ENCODE measurements at regions of chr19 and their contacts with region 1.

Region 1: GRCh38 chr19:13033819-13034611 is 38.7 kb downstream of the NFIX start:
- DNase-seq: peak; percentile 54
- H3K4me3 ChIP-seq: no peak overlapping the region
- H3K27ac ChIP-seq: no peak overlapping the region
- H3K4me1 ChIP-seq: no peaks in the 10 kb centered on the region
- CTCF ChIP-seq: peak; percentile 91

Region 2: DNA sequence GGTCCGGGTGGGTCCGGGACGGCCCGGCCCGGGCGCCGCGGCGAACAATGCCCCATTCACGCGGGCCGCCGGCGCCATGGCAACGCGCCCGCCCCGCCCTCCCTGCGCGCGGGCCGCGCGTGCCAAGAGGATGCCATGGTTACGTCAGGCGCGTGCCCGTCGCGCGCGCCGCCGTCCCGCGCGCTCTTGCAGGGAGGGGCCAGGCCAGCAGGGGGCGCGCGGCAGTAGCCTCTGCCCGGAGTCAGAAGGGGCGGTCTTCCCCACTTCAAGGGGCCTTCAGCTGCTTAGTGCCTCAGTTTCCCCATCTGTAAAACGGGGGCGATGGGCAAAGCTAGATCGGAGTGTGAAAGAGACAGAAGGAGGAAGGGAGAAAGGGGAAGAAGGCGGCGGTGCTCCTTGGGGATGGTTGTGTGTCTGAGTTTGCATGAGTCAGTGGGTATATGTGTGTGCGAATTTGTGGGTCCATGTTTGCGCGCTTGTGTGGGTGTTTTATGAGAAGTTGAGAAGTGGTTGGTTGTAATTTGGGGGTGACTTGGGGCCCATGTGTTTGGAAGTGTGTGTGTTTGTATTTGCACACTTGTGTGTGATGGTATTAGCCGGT is 50.4 kb before region 1 on chr19:
- CTCF ChIA-PET with region 1: interaction called, 3 read pairs
- POLR2A ChIA-PET with region 1: no interaction called
- intact Hi-C with region 1: loop called (anchors 1 kb)
- DNase-seq: peak; percentile 79
- H3K4me3 ChIP-seq: peak overlapping the region; percentile 51
- H3K27ac ChIP-seq: no peak overlapping the region
- H3K4me1 ChIP-seq: no peaks in the 10 kb centered on the region
- CTCF ChIP-seq: peak; percentile 82

Region 3: DNA sequence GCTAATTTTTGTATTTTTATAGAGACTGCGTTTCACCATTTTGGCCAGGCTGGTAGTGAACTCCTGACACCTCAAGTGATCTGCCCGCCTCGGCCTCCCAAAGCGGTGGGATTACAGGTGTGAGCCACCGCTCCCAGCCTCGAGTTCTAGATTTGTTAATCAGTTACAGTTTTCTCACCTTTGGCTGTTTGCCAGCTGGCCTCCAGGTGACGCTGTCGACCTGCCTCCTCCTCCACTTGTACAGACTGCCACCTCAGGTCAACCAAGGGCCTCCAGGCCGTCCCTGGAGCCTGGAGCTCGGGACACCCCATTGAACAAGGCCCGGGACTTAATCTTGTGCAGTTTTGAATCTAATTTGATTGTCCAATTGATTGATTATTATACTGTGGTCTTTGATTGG is 161.7 kb after region 1 on chr19:
- CTCF ChIA-PET with region 1: no interaction called
- POLR2A ChIA-PET with region 1: no interaction called
- intact Hi-C with region 1: no loop called
- DNase-seq: peak; percentile 84
- H3K4me3 ChIP-seq: no peak overlapping the region
- H3K27ac ChIP-seq: no peak overlapping the region
- H3K4me1 ChIP-seq: peaks cover 16% of the 10 kb centered on the region
- CTCF ChIP-seq: peak; percentile 96

Measured in OCI-LY7 (cell line).